BJ (cell line): ENCODE measurements at regions of chr22 and their contacts with region 1.

Region 1: DNA sequence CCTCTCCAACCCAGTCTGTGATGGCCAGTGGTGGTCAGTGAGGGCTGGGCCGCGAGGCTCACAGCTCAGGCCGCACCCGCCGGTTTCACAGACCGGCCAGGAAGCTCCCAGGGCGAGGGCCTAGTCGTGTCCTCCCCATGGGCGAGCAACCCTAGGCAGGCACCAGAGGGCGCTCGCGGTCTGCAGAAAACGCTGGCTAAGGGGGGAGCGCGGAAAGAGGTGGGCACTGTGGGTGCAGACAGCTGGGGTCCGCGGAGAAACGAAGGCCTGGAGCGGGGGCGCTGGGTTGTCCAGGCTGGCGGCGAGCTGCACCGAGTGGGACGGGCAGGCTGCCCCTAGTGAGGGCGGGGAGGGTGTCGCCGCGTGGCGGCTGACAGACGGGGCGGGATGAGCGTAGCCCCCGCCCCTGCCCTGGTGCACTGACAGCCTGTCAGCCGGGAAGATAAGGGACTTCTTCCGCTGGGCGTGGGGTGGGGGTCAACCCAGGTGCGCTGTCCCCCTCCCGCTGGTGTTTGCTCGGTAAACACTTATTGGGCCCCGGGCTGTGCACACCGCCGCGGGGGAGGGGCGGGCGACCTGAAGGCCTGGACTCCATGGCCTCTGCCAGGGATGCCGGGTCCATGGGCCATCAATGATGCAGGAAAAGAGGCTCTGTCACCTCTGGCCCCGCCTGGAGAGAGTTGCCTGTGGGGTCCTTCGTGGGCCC is 7.5 kb downstream of the GP1BB start:
- DNase-seq: peak; percentile 3
- H3K4me3 ChIP-seq: peak overlapping the region; percentile 52
- H3K27me3 ChIP-seq: no peaks in the 10 kb centered on the region
- CTCF ChIP-seq: peak; percentile 96

Region 2: GRCh38 chr22:19756288-19757128 is 25.7 kb after region 1 on chr22:
- CTCF ChIA-PET with region 1: interaction called, 22 read pairs
- POLR2A ChIA-PET with region 1: no interaction called
- DNase-seq: no peak
- H3K4me3 ChIP-seq: no peak overlapping the region
- H3K27me3 ChIP-seq: peaks cover 40% of the 10 kb centered on the region
- CTCF ChIP-seq: peak; percentile 53

Region 3: GRCh38 chr22:19843107-19843856 is 112.5 kb after region 1 on chr22:
- CTCF ChIA-PET with region 1: interaction called, 13 read pairs
- POLR2A ChIA-PET with region 1: no interaction called
- DNase-seq: no peak
- H3K4me3 ChIP-seq: no peak overlapping the region
- H3K27me3 ChIP-seq: no peaks in the 10 kb centered on the region
- CTCF ChIP-seq: no peak

Region 4: DNA sequence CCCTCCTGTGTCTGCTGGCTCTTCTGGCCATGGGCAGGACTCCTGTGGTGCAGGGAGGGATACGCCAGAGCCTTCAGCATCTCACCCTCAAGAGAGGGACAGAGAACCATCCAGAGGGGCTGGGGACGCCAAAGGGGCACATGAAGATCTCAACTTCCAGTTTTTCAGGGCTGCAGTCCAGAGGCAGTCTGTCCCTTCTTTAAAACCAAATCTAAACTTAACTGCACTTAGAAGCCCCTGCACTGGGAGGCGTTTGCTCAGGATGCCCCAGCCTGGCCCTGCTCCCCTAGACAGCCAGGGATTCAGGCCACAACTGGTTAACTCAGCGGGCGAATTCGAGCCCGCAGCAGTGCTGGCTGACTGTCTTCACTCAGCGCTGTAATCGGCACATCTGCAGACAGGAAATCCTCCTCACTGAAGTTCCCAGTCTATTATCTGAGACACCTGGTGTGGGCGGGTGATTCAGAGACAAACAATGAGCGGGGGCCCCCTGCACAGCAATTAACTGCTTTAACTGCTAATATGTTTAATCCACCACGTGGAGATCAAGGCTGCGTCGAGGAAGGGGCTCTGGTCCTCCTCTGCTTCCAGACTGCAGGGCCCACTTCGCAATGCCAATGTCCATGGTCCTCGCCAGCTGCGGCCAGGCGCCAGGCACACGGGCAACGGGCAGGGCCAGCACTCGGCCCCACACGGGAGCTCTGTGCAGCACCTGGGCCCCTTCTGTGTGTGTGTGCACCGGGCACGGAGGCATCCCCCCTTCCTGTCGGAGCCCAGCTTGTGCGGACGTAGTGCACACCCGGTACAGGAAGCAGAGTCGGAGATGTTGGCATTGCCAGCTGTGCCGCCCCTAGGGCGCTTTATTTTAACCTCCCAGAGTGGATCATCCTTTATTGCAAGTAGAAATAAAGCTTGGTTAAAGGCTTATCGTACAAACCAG is 160.8 kb after region 1 on chr22:
- CTCF ChIA-PET with region 1: interaction called, 22 read pairs
- POLR2A ChIA-PET with region 1: no interaction called
- DNase-seq: no peak
- H3K4me3 ChIP-seq: no peak overlapping the region
- H3K27me3 ChIP-seq: no peaks in the 10 kb centered on the region
- CTCF ChIP-seq: no peak

Region 5: DNA sequence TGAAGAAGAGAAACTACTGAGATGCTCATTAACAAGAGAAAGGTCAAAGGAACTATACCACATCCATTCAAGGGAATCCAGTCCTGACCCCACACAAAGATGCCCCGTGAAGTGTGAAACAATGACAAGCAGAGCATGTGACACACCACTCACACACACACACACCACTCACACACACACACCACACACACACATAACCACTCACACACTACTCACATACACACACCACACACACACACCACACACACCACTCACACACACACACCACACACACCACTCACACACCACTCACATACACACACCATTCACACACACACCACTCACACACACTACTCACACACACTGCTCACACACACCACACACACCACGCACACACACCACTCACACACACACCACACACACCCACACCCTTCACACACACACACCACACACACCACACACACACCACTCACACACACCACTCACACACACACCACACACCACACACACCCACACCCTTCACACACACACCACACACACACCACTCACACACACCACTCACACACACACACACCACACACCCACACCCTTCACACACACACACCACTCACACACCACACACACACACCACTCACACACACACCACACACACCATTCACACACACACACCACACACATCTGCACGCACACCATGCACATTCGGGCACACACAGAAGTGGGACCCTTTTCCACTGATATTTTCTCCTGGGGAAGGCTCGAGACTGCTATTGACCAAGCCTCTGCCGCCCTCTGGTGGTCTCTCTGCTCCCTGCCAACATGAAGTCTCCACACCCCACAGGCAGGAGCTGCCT is 178.8 kb after region 1 on chr22:
- CTCF ChIA-PET with region 1: interaction called, 277 read pairs
- POLR2A ChIA-PET with region 1: no interaction called
- DNase-seq: no peak
- H3K4me3 ChIP-seq: no peak overlapping the region
- H3K27me3 ChIP-seq: no peaks in the 10 kb centered on the region
- CTCF ChIP-seq: peak; percentile 90

Region 6: DNA sequence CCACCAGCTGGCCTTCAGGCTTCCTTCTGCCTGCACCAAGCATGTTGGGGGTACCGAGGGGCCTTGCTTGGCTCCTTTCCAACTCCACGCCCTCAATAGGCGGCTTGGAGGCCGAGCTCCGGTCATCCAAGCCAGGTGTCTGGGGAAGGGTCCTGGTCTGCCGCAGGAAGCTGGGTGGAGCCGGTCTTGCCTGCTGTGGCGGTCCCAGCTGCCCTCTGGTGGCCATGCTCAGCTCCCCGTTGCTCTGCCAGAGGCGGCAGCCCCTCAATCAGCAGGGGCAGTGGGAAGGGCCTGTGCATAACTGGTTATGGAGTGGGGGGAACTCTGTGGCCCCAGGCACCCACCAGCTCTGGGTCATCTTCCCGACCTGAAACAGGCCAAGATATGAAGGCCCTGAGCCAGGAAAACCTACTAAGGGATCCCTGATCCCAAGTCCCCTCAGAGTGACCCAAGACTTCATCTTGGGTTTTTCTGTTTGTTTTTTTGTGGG is 282.6 kb after region 1 on chr22:
- CTCF ChIA-PET with region 1: interaction called, 23 read pairs
- POLR2A ChIA-PET with region 1: no interaction called
- DNase-seq: no peak
- H3K4me3 ChIP-seq: no peak overlapping the region
- H3K27me3 ChIP-seq: peaks cover 5% of the 10 kb centered on the region
- CTCF ChIP-seq: peak; percentile 81